ENCODE measurements at regions of chr16 and their contacts with region 1.

Region 1: DNA sequence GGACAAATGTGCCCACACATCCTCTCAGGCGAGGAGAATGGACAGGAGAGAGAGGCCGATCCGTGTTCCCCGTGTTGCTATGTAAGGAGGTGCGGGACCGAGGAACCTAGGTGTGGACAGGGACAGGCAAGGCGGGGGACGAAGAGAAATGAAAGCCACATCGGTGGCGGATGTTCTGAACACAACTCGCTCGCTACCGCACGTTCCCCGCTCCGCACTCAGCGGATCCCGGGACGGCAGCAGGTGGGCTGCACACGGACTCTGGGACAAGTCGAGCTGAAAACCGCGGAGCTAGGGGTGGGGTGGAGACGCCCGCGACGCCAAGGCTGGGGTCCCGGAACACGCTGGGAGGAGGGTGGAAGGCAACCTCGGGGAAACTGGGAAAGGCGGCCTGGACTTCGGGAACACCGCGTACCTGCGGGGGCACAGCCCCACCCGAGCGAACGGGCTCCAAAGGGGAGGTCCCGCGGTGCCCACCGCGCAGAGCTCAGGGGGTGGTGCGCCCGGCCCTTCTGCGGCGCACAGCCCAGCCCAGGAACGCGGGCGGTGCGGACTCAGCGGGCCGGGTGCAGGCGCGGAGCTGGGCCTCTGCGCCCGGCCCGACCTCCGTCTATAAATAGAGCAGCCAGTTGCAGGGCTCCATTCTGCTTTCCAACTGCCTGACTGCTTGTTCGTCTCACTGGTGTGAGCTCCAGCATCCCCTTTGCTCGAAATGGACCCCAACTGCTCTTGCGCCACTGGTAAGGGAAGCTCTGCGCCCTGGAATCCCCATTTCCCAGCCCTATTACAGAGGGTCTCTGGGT is at the start of gene MT1E:
- DNase-seq: peak; percentile 77
- ATAC-seq: peak; percentile 86
- H3K4me3 ChIP-seq: peak within 1 kb of the TSS; percentile 66 to 72
- H3K27ac ChIP-seq: peak within 1 kb of the TSS; percentile 97
- H3K4me1 ChIP-seq: peaks cover 12 to 43% of the 10 kb centered on the region in 2 experiments
- H3K27me3 ChIP-seq: no peaks in the 10 kb centered on the region
- CTCF ChIP-seq: no peak
- POLR2A ChIP-seq: peak; percentile 98
- RAD21 ChIP-seq: no peak
- total RNA-seq, gene MT1E: 383 TPM

Region 2: GRCh38 chr16:56600398-56600999 is 24.8 kb before region 1 on chr16:
- CTCF ChIA-PET with region 1: interaction called, 7 read pairs
- POLR2A ChIA-PET with region 1: interaction called, 344 read pairs
- RAD21 ChIA-PET with region 1: interaction called in 1 of 2 experiments, 5 read pairs
- intact Hi-C with region 1: no loop called
- DNase-seq: peak; percentile 55
- ATAC-seq: peak; percentile 86
- H3K4me3 ChIP-seq: no peak overlapping the region
- H3K27ac ChIP-seq: no peak overlapping the region
- H3K4me1 ChIP-seq: peaks cover 7 to 28% of the 10 kb centered on the region in 2 experiments; a peak in 3 of 4 replicates
- H3K27me3 ChIP-seq: no peaks in the 10 kb centered on the region
- CTCF ChIP-seq: peak in 2 of 3 experiments; percentile 80 to 81; a peak in 4 of 6 replicates
- POLR2A ChIP-seq: no peak
- RAD21 ChIP-seq: no peak

Region 3: GRCh38 chr16:56643080-56643778 is 17.9 kb after region 1 on chr16:
- CTCF ChIA-PET with region 1: interaction called, 11 read pairs
- POLR2A ChIA-PET with region 1: interaction called, 47 read pairs
- RAD21 ChIA-PET with region 1: interaction called in 1 of 2 experiments, 4 read pairs
- intact Hi-C with region 1: no loop called
- DNase-seq: peak; percentile 78
- ATAC-seq: peak; percentile 100
- H3K4me3 ChIP-seq: peak overlapping the region; percentile 28 to 46
- H3K27ac ChIP-seq: no peak overlapping the region; the same call in 1 of the 2 replicates
- H3K4me1 ChIP-seq: peaks cover 11 to 21% of the 10 kb centered on the region in 2 experiments
- H3K27me3 ChIP-seq: no peaks in the 10 kb centered on the region
- CTCF ChIP-seq: peak; percentile 43 to 51 (median 50); a peak in 5 of 6 replicates
- POLR2A ChIP-seq: no peak
- RAD21 ChIP-seq: peak; percentile 81

Region 4: DNA sequence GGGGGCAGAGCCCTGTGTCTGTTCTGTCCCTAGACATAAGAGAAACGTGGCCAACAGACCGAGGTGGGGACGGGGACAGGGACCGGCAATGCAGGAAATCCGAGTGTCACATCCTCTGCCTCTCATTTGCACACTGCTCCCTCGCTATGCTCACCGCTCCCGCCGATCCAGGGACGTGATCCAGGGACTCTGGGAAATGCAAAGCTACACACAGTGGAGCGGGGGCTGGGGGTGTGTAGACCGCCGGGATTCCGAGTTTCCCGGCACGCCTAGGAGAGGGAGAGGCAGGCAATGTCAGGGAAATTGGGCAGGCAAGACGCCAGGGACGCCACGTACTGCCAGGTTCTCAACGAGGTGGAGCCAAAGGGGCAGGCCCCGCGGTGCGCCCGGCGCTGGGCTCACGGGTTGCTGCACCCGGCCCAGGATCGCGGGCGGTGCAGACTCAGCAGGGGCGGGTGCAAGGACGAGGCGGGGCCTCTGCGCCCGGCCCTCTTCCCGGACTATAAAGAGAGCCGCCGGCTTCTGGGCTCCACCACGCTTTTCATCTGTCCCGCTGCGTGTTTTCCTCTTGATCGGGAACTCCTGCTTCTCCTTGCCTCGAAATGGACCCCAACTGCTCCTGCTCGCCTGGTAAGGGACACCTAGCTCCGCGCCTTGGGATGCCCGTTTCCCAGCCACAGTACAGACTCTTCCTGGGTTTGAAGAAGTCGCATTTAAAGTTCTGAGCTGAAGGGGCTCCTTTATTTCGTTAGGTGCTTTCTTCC is 56.8 kb after region 1 on chr16 and contains the start of gene MT1X:
- CTCF ChIA-PET with region 1: no interaction called
- POLR2A ChIA-PET with region 1: interaction called, 9 read pairs
- RAD21 ChIA-PET with region 1: interaction called in 1 of 2 experiments, 3 read pairs
- intact Hi-C with region 1: loop called (anchors 5 kb)
- DNase-seq: peak; percentile 81
- ATAC-seq: peak; percentile 97
- H3K4me3 ChIP-seq: peak within 1 kb of the TSS; percentile 67 to 81
- H3K27ac ChIP-seq: peak within 1 kb of the TSS; percentile 61
- H3K4me1 ChIP-seq: peaks cover 13 to 32% of the 10 kb centered on the region in 2 experiments; a peak in 3 of 4 replicates
- H3K27me3 ChIP-seq: no peaks in the 10 kb centered on the region
- CTCF ChIP-seq: no peak
- POLR2A ChIP-seq: peak; percentile 95
- RAD21 ChIP-seq: no peak
- total RNA-seq, gene MT1X: 50.2 TPM

Measured in HCT116 (cell line).